ENCODE measurements at regions of chr2 and their contacts with region 1.

Region 1: GRCh38 chr2:26911911-26912861 is 58.3 kb upstream of the MAPRE3 start:
- DNase-seq: peak; percentile 68 to 91 (median 89)
- H3K4me3 ChIP-seq: peak overlapping the region in 55 of 59 donors; percentile 1 to 59 (median 35)
- H3K27ac ChIP-seq: peak overlapping the region; percentile 35 to 95 (median 87)
- H3K27me3 ChIP-seq: no peaks in the 10 kb centered on the region
- CTCF ChIP-seq: peak in 4 of 56 donors; percentile 5 to 29 (median 7)

Region 2: GRCh38 chr2:26861610-26862224 is 50.5 kb before region 1 on chr2:
- intact Hi-C with region 1: loop called in 1 of 2 experiments (anchors 5 kb)
- DNase-seq: peak in 3 of 10 donors; percentile 34 to 45 (median 41)
- H3K4me3 ChIP-seq: no peak overlapping the region
- H3K27ac ChIP-seq: peak overlapping the region in 50 of 59 donors; percentile 2 to 86 (median 62)
- H3K27me3 ChIP-seq: no peaks in the 10 kb centered on the region
- CTCF ChIP-seq: no peak